ENCODE measurements at regions of chr11 and their contacts with region 1.

Region 1: DNA sequence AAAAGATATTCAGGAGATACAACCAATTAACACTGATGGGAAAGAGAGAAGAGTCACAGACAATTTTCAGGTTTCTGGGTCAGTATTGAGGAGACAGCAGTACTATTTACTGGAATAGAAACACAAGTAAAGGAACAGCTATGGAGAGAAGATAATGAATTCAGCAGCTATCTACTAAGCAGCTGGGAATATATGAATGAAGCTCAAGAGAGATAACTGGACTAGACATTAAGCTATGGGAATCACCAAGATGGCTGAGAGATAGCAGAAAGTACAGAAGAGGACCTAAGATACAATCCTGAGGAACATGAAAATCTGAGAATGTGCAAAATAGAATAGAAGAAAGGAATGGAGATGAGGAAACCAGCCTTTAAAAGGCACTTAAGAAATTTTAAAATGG is 15.9 kb downstream of the ALG9 start:
- H3K4me3 ChIP-seq: no peak overlapping the region
- H3K27ac ChIP-seq: no peak overlapping the region
- H3K4me1 ChIP-seq: no peaks in the 10 kb centered on the region
- CTCF ChIP-seq: no peak

Region 2: GRCh38 chr11:111833524-111833923 is 22.0 kb before region 1 on chr11:
- CTCF ChIA-PET with region 1: no interaction called
- POLR2A ChIA-PET with region 1: no interaction called
- H3K4me3 ChIP-seq: no peak overlapping the region
- H3K27ac ChIP-seq: no peak overlapping the region
- H3K4me1 ChIP-seq: no peaks in the 10 kb centered on the region
- CTCF ChIP-seq: no peak

Region 3: GRCh38 chr11:111870886-111871692 is 15.6 kb after region 1 on chr11 and contains the start of gene ALG9:
- CTCF ChIA-PET with region 1: interaction called, 4 read pairs
- POLR2A ChIA-PET with region 1: interaction called, 10 read pairs
- H3K4me3 ChIP-seq: peak within 1 kb of the TSS; percentile 89
- H3K27ac ChIP-seq: peak within 1 kb of the TSS; percentile 66; the same call in 1 of the 2 replicates
- H3K4me1 ChIP-seq: no peaks in the 10 kb centered on the region
- CTCF ChIP-seq: peak; percentile 44; the same call in 1 of the 2 replicates